K562 (cell line): ENCODE measurements at regions of chr7 and their contacts with region 1.

Region 1: DNA sequence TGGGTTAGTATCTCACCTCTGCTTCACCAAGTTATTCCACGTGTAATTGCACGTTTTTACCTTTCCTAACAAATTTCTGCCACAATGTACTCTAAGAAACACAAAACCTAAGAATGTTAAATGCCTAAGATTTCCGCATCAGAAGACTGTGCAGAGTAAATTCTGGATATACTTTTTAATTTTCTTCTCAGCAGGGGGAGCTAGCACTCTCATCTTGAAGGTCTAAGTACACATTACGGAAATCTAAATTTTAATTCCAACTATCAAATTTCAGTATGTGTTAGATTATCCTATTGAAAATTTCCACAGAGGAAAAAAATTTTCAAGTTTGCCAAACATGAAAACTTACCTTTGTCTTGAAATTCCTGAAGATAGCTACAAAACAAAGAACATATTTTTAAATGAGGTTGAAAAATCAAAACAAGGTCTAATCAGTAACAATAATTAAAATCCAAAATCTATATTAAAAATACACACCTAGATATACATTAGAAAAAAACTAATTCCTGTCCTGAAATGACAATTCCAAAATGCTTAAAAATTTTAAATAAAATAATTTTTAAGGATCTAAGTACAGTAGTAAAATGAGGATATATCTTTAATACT is 10.5 kb downstream of the SKAP2 start:
- DNase-seq: peak in 1 of 4 experiments; percentile 35
- ATAC-seq: peak; percentile 60; the same call in 1 of the 3 replicates
- H3K4me3 ChIP-seq: no peak overlapping the region
- H3K27ac ChIP-seq: no peak overlapping the region
- H3K4me1 ChIP-seq: peaks cover 3 to 14% of the 10 kb centered on the region in 2 experiments; a peak in 4 of 5 replicates
- H3K27me3 ChIP-seq: peaks cover 2 to 10% of the 10 kb centered on the region in 2 experiments; a peak in 1 of 5 replicates
- CTCF ChIP-seq: peak; percentile 28 to 63 (median 42); a peak in 4 of 6 replicates
- EP300 ChIP-seq: no peak
- POLR2A ChIP-seq: no peak
- RAD21 ChIP-seq: peak; percentile 57 to 64

Region 2: GRCh38 chr7:27143023-27143949 is 289.4 kb after region 1 on chr7 and contains the start of gene HOXA5:
- CTCF ChIA-PET with region 1: no interaction called
- POLR2A ChIA-PET with region 1: no interaction called
- in situ Hi-C with region 1: loop called (anchors 10 kb)
- intact Hi-C with region 1: no loop called
- DNase-seq: no peak
- ATAC-seq: no peak
- H3K4me3 ChIP-seq: no peak within 1 kb of the TSS
- H3K27ac ChIP-seq: no peak within 1 kb of the TSS
- H3K4me1 ChIP-seq: peaks cover 0 to 20% of the 10 kb centered on the region in 2 experiments; a peak in 2 of 5 replicates
- H3K27me3 ChIP-seq: peaks cover 30 to 87% of the 10 kb centered on the region in 2 experiments
- CTCF ChIP-seq: no peak
- EP300 ChIP-seq: no peak
- POLR2A ChIP-seq: no peak
- RAD21 ChIP-seq: no peak
- polyA plus RNA-seq, gene HOXA5: not detected